ENCODE measurements at regions of chr15 and their contacts with region 1.

Region 1: DNA sequence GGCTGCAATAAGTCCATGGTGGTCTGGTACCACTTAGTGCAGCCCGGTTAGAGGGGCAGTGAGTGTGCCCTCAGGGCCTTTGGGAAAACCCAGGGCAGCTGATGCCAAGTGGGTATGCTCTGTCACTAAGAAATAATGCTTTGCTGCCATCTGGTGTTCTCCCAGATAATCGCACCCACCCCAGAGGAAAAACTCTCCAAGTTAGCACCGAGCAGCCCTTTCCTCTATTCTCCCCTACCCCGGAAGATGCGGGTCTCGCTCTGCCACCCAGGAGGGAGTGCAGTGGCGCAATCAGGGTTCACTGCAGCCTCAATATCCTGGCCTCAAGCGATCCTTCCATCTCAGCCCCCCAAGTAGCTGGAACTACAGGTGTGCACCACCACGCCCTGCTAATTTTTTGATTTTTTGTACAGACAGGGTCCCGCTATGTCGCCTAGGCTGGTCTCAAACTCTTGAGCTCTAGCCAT is 21.3 kb upstream of the DAPK2 start:
- DNase-seq: no peak
- H3K4me3 ChIP-seq: no peak overlapping the region
- H3K27me3 ChIP-seq: no peaks in the 10 kb centered on the region
- CTCF ChIP-seq: peak; percentile 78

Region 2: DNA sequence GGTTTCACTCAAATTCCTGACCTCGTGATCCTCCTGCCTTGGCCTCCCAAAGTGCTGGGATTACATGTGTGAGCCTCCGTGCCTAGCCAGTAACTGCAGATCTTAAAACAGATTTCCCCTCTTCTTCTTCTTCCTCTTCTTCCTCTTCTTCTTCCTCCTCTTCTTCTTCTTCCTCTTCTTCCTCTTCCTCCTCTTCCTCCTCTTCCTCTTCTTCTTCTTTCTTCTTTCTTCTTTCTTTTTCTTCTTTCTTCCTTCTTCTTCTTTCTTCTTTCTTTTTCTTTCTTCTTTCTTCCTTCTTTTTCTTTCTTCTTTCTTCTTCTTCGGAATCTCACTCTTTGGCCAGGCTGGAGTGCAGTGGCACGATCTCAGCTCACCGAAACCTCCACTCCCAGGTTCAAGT is 555.4 kb before region 1 on chr15:
- CTCF ChIA-PET with region 1: interaction called, 3 read pairs
- POLR2A ChIA-PET with region 1: interaction called, 16 read pairs
- DNase-seq: no peak
- H3K4me3 ChIP-seq: no peak overlapping the region
- H3K27me3 ChIP-seq: no peaks in the 10 kb centered on the region
- CTCF ChIP-seq: no peak

Region 3: GRCh38 chr15:63610200-63610841 is 457.3 kb before region 1 on chr15:
- CTCF ChIA-PET with region 1: interaction called, 27 read pairs
- POLR2A ChIA-PET with region 1: no interaction called
- DNase-seq: no peak
- H3K4me3 ChIP-seq: no peak overlapping the region
- H3K27me3 ChIP-seq: no peaks in the 10 kb centered on the region
- CTCF ChIP-seq: peak; percentile 83

Region 4: DNA sequence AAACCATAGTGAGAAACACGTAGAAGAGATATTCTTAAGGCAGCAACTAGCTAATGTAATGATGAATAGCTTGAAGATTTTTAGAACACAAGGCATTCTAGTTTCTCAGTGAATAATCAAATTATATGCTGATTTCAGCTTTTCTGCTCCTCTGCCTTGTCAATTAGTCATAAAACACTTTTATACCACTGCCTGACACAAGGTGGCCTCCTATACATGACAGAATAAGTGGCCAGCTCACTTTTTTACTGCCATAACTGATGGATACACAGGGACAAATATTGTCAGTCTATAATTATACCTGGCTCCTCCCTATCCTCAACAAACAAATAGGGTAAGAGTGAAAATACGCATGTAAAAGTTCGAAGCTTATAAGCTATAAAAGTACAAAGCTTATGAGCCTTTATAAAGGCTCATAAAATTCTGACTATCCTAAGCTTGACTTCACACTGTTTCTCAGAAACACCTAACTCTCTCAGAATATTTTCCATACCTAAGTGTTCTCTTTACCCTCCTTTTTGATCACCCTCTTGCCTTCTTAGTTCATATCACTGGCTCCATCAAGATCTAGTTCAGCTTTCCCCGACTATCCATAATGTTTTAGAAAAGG is 315.4 kb before region 1 on chr15:
- CTCF ChIA-PET with region 1: interaction called, 56 read pairs
- POLR2A ChIA-PET with region 1: no interaction called
- DNase-seq: no peak
- H3K4me3 ChIP-seq: no peak overlapping the region
- H3K27me3 ChIP-seq: no peaks in the 10 kb centered on the region
- CTCF ChIP-seq: peak; percentile 70

Region 5: DNA sequence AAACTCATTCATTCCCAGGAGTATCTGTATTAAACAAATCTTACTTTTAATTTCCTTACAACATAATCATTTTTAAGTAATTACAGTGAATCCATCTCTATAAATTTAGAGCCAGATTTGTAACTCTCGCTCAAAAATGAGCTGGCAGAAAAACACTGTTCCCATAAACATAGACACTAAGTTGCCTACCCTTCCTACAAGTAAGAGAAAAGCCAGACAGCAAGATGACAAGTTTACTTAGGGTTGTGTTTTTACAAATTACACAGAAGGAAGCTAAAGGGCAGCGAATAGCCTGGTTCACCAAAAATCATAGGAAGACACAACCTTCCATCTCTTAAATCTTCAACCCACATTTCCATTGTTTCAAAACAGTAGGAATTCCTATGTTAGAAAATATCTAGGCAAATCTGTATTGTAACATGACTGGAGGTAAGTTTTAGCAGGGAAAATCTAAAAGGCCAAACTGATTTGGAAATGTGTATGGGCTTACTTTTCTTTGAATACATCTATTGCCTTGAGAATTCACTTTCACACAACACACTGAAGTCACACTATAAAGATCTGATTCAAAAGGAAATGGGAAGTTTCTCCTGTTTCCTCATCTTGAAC is 255.6 kb before region 1 on chr15:
- CTCF ChIA-PET with region 1: no interaction called
- POLR2A ChIA-PET with region 1: no interaction called
- DNase-seq: no peak
- H3K4me3 ChIP-seq: no peak overlapping the region
- H3K27me3 ChIP-seq: no peaks in the 10 kb centered on the region
- CTCF ChIP-seq: no peak

Region 6: GRCh38 chr15:63891079-63891767 is 176.4 kb before region 1 on chr15:
- CTCF ChIA-PET with region 1: interaction called, 13 read pairs
- POLR2A ChIA-PET with region 1: no interaction called
- DNase-seq: no peak
- H3K4me3 ChIP-seq: no peak overlapping the region
- H3K27me3 ChIP-seq: no peaks in the 10 kb centered on the region
- CTCF ChIP-seq: peak; percentile 87

Region 7: DNA sequence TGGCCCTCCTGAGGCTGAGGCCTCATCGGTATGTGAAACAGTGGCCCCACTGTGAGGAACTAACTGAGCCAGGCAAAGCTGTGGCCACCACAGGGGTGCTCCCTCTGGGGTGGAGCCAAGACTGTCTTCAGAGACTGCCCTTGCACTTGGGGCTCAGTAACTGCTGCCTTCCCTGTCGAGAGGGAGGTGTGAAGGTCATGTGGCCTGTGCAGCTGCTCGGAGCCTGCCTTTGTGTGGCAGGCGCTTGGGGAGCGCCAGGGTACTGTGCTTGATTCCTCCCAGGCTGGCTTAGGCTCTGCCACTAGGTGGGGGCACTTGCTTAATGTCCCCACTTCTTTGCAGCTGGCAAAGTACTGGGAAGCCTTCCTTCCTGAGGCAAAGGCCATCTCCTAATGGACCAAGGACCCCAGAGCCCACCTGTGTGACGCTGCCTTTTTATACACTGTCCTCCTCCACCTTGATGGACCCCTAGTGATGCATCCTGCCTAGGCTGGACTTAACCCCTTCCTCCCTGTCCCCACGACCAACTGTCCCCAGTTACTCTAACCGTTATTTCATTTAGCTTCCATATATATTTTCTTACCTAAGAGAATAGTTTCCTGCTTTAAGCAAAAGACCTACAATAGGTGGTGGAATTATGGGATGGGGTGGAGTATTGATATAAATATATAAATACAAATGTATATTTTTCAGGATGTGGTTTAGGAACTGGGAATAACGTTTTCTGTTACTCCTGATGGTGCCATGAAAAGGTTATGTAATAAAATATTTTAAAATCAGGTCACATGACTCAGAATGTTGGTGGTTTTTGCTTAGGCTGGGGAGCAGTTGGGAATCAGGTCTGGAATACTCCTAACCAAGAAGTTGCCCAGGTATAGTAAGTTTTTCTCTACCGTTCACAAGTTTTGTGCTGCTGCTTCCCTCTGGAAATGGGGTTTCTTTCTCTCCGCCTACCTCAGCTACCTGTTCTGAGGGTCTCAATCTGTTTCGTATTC is 69.9 kb after region 1 on chr15:
- CTCF ChIA-PET with region 1: no interaction called
- POLR2A ChIA-PET with region 1: no interaction called
- DNase-seq: no peak
- H3K4me3 ChIP-seq: no peak overlapping the region
- H3K27me3 ChIP-seq: no peaks in the 10 kb centered on the region
- CTCF ChIP-seq: no peak